ENCODE measurements at regions of chr3 and their contacts with region 1.

Region 1: GRCh38 chr3:129602730-129603560 is 3.5 kb downstream of the PLXND1 start:
- DNase-seq: no peak
- H3K4me3 ChIP-seq: peak overlapping the region in 7 of 8 donors; percentile 12 to 91 (median 71)
- H3K27ac ChIP-seq: peak overlapping the region in 7 of 8 donors; percentile 51 to 91 (median 88)
- H3K4me1 ChIP-seq: peaks cover 39 to 96% (median 93%) of the 10 kb centered on the region in 6 donors
- H3K27me3 ChIP-seq: peaks cover 0 to 33% (median 10%) of the 10 kb centered on the region in 7 donors
- CTCF ChIP-seq: no peak
- POLR2A ChIP-seq: peak in 1 of 3 donors; percentile 14

Region 2: GRCh38 chr3:129490242-129491045 is 112.5 kb before region 1 on chr3:
- intact Hi-C with region 1: loop called (anchors 5 kb)
- DNase-seq: peak; percentile 90
- H3K4me3 ChIP-seq: no peak overlapping the region
- H3K27ac ChIP-seq: peak overlapping the region in 5 of 8 donors; percentile 20 to 71 (median 47)
- H3K4me1 ChIP-seq: peaks cover 0 to 42% (median 10%) of the 10 kb centered on the region in 6 donors
- H3K27me3 ChIP-seq: no peaks in the 10 kb centered on the region
- CTCF ChIP-seq: peak; percentile 70 to 93 (median 86)
- POLR2A ChIP-seq: peak in 1 of 3 donors; percentile 18

Region 3: DNA sequence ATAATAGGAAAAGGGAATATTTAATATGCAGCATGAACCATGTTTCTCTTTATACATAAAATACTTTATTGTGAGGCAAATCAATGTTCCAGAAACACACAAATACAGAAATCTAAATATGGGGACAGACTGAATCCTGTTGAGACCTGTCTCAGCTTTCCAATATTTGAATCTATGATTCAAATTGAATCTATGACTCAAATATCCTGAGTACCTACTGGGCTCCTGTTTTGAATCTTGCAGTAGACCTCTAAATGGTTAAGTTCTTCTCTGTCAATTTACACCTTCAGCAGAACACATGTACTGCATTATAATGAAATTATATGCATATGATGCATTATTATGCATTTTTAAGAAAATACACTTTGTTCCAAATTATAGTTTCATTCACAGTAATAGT is 146.7 kb after region 1 on chr3:
- intact Hi-C with region 1: no loop called
- DNase-seq: no peak
- H3K4me3 ChIP-seq: no peak overlapping the region
- H3K27ac ChIP-seq: no peak overlapping the region
- H3K4me1 ChIP-seq: peaks cover 0 to 5% (median 0%) of the 10 kb centered on the region in 6 donors
- H3K27me3 ChIP-seq: no peaks in the 10 kb centered on the region
- CTCF ChIP-seq: no peak
- POLR2A ChIP-seq: no peak

Measured in spleen (tissue), 13 donors.